GM10248 (cell line): ENCODE measurements at regions of chrX and their contacts with region 1.

Region 1: GRCh38 chrX:132071260-132071659 is 48.2 kb downstream of the STK26 start:
- DNase-seq: no peak
- CTCF ChIP-seq: no peak

Region 2: DNA sequence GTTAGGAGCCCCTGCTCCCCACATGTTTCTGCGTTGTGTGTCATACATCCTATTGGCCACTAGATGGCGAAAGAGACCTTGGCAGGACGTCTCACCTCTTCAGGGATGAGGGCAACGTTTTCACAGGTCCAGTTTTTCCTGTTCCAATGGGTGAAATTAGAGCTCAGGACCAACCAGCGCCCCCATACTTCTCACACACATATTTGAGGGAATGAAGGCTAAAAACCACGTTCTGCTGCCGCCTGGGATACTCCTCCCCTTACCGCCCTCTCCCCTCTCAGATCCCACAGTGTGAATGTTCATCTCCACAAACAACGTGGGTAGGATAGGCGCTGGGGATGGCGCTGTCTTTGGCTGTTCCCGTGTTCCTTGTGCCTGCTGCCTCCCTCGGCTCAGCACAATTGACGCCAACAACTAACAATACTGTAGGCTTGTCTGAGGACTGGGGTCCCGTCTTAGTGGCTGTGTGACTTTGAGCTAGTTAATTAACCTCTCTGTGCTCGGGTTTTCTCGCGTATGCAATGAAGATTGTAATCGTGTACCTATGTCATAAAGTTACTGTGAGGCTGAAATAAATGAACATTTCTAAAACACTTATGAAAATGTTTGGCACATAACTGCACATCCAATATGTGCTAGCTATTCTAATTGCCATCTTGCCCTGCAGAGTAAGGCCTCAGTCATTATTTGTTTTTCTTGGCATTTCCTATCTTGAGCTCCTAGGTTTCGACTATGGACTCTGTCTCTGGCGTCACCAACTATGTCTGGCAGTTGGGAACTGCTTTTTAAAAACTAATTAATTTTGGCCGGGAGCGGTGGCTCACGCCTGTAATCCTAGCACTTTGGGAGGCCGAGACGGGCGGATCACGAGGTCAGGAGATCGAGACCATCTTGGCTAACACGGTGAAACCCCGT is 229.5 kb before region 1 on chrX:
- CTCF ChIA-PET with region 1: interaction called, 11 read pairs
- POLR2A ChIA-PET with region 1: no interaction called
- DNase-seq: peak; percentile 69
- CTCF ChIP-seq: peak; percentile 73

Region 3: DNA sequence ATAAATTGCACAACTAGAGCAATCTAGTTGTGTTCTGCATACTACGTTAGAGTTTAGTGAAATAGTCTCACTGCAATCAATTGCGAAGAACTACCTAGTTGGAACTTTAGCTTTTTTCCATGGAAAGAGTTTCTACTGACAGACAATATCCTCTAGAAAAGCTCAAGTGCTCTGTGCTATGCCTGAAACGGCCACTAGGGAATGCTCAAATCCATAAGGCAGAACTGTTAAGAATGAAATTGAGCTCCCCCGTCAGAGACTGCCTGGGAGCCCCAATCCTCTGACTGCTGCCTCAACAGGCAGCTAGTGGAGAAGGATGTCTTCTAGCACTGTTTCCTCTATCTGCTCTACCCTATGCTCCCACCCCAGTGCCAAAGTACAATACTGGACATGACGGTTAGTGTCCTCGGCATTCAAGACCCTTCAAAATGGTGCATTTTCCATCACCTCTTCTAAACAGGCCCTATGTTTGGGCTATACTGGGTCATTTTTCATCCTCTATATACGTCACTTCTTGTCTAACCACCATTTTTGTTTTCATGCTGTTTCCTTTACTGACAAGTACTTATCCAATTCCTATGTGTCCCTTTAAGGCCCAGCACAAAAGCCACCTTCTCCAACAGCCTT is 21.3 kb after region 1 on chrX:
- CTCF ChIA-PET with region 1: interaction called, 10 read pairs
- POLR2A ChIA-PET with region 1: no interaction called
- DNase-seq: peak; percentile 50
- CTCF ChIP-seq: peak; percentile 51

Region 4: GRCh38 chrX:132146461-132146860 is 75.2 kb after region 1 on chrX:
- CTCF ChIA-PET with region 1: no interaction called
- POLR2A ChIA-PET with region 1: no interaction called
- DNase-seq: no peak
- CTCF ChIP-seq: no peak

Region 5: DNA sequence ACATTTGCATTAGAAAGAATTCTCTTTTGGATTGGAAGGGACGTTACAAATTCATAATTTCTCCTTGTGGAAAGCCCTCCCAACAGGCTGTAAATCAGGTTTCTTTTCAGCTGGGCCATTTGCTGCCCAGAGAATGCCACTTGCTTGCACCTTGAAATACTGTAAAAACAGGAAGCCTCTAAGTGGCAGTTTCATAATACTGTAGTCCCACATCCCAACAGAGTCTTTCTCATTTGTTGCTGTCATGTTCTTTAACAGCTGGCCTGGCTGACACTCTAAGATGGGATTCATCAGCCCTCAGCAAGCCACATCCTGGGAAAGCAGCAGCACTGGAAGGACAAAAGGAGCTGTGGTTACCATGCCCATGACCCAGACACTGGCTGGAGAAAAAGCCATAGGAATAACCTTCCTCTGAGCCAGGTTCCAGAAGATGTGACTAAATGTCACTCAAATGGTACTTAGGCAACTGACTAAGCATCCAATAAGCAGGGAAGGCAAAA is 639.4 kb after region 1 on chrX:
- CTCF ChIA-PET with region 1: no interaction called
- POLR2A ChIA-PET with region 1: no interaction called
- DNase-seq: no peak
- CTCF ChIP-seq: no peak